Aorta (tissue), 5 donors: ENCODE measurements at regions of chr4 and their contacts with region 1.

Region 1: GRCh38 chr4:17544205-17544604 is 29.2 kb downstream of the CLRN2 start:
- DNase-seq: no peak
- ATAC-seq: no peak
- H3K4me3 ChIP-seq: no peak overlapping the region
- H3K27ac ChIP-seq: no peak overlapping the region
- H3K4me1 ChIP-seq: no peaks in the 10 kb centered on the region
- H3K27me3 ChIP-seq: peaks cover 0 to 1% of the 10 kb centered on the region in 2 donors

Region 2: DNA sequence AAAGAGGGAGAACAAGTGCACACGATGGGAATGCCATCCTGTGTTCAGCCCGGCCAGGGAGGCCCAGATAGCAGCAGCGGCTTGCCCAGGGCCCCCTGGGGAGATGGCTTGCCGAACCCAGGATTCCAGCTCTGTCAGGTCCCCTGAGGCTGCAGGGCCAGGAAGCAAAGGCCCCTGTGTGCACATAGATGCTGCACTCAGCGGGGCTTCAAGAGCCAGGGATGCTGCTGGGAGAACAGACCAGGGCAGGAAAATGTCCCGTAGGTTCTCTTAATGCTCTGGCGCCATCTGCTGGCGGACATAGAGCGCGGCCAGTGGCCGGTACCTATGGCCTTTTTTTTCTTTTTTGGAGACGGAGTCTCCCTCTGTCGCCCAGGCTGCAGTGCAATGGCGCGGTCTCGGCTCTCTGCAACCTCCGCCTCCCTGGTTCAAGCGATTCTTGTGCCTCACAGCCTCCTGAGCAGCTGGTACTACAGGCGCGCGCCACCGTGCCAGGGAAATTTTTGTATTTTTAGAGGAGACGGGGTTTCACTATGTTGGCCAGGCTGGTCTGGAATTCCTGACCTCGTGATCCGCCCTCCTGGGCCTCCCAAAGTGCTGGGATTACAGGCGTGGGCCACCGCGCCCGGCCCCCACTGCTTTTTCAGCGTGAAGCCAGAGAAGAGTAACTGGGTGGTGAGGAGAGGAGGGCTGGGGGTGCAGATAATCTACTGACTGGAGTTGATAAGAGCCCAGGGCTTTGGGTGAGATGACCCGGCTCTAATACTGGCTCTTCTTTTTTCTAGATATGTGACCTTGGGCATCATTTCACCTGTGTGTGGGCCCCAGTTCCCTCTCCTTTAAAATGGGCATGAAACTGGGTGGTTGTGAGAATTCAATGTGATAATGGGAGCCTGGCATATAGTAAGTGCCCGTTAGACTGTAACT is 92.8 kb after region 1 on chr4:
- intact Hi-C with region 1: loop called (anchors 2 kb)
- DNase-seq: peak; percentile 83 to 93
- ATAC-seq: peak; percentile 83
- H3K4me3 ChIP-seq: no peak overlapping the region
- H3K27ac ChIP-seq: no peak overlapping the region
- H3K4me1 ChIP-seq: no peaks in the 10 kb centered on the region
- H3K27me3 ChIP-seq: no peaks in the 10 kb centered on the region

Region 3: GRCh38 chr4:17962171-17962570 is 418.0 kb after region 1 on chr4:
- intact Hi-C with region 1: no loop called
- DNase-seq: no peak
- ATAC-seq: no peak
- H3K4me3 ChIP-seq: no peak overlapping the region
- H3K27ac ChIP-seq: no peak overlapping the region
- H3K4me1 ChIP-seq: no peaks in the 10 kb centered on the region
- H3K27me3 ChIP-seq: no peaks in the 10 kb centered on the region